ENCODE measurements at regions of chr16 and their contacts with region 1.

Region 1: DNA sequence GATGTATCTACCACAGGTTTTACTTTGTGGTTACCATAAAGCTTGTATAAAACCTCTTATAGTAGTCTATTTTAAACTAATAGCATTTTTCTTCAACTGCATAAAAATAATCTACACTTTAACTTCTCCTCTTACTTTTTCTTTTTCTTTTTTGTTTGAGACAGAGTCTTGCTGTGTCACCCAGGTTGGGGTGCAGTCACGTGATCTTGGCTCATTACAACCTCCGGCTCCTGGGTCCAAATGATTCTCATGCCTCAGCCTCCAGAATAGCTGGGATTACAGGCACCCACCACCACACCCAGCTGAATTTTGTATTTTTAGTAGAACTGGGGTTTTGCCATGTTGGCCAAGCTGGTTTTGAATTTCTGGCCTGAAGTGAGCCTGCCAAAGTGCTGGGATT is 53.4 kb upstream of the ZKSCAN2 start:
- DNase-seq: no peak
- H3K4me3 ChIP-seq: no peak overlapping the region
- CTCF ChIP-seq: no peak

Region 2: GRCh38 chr16:25216785-25217526 is 94.1 kb before region 1 on chr16 and contains the start of gene AQP8:
- in situ Hi-C with region 1: no loop called
- DNase-seq: no peak
- H3K4me3 ChIP-seq: no peak within 1 kb of the TSS
- CTCF ChIP-seq: no peak

Region 3: GRCh38 chr16:25366078-25366477 is 55.0 kb after region 1 on chr16:
- in situ Hi-C with region 1: loop called (anchors 5 kb)
- DNase-seq: no peak
- H3K4me3 ChIP-seq: no peak overlapping the region
- CTCF ChIP-seq: no peak

Region 4: DNA sequence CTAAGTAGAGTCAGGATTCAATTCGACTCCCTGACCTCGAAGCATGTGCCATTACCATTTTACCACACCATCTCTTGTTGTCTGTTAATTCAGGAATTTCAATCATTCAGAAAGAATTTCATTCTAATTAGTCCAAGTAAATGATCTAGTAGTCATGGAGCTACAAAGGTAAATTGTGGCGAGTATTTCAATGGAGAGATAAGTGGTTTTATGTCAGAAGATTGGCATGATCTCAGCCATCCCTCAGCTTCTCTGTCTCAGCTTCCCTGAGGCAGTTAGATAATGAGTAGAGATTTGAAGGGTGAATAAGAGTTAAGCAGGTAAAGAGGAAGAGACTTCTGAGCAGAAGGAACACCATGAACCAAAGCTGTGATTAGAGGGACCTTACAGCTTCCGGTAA is 474.3 kb after region 1 on chr16:
- in situ Hi-C with region 1: no loop called
- DNase-seq: no peak
- H3K4me3 ChIP-seq: no peak overlapping the region
- CTCF ChIP-seq: no peak